ENCODE measurements at regions of chr3 and their contacts with region 1.

Region 1: GRCh38 chr3:12135029-12135657 is 23.6 kb downstream of the TIMP4 start:
- DNase-seq: peak; percentile 75 to 89 (median 89)
- ATAC-seq: peak; percentile 84 to 90
- H3K4me3 ChIP-seq: no peak overlapping the region
- H3K27ac ChIP-seq: no peak overlapping the region
- H3K4me1 ChIP-seq: peaks cover 5% of the 10 kb centered on the region
- H3K27me3 ChIP-seq: no peaks in the 10 kb centered on the region

Region 2: DNA sequence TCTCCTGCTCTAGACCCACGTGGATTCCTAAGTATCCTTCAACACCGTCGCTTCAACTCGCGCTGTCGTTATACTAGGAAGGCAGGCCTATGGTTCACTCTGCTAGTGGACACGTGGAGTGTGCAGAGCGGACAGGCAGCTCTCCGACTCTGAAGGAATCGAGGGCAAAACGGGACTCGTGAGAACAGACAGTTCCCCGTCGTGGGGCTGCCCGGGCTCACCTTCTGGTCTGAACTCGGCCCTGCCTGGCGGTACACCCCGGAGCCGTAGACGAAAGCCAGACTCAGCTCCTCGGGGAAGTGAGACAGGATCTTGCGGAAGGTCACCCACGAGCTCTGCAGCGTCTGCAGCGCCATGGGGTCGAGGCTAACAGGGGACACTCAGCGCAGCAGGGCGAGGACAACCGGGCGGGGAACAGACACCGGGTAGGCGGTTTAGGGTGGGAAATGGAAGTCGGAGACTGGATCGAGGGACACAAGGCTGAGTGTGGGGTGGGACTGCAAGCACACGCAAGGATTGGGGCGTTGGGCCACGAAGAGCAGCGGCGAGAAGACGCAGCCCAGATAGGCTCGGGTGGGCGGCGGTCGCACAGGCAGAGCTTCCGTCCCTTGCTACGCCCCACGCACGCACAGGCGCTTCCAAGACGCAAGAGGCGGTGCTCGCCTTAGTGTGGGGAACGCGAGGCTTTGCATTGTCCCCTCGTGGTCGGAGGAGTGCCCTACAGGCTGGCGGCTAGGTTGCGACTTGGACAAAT is 288.7 kb before region 1 on chr3 and contains the start of gene TAMM41:
- intact Hi-C with region 1: no loop called
- DNase-seq: peak; percentile 95 to 97 (median 97)
- ATAC-seq: peak; percentile 100
- H3K4me3 ChIP-seq: peak within 1 kb of the TSS; percentile 73
- H3K27ac ChIP-seq: peak within 1 kb of the TSS; percentile 78
- H3K4me1 ChIP-seq: peaks cover 5% of the 10 kb centered on the region
- H3K27me3 ChIP-seq: no peaks in the 10 kb centered on the region
- total RNA-seq, gene TAMM41: 9.8 to 11.1 (median 10.8) TPM

Region 3: DNA sequence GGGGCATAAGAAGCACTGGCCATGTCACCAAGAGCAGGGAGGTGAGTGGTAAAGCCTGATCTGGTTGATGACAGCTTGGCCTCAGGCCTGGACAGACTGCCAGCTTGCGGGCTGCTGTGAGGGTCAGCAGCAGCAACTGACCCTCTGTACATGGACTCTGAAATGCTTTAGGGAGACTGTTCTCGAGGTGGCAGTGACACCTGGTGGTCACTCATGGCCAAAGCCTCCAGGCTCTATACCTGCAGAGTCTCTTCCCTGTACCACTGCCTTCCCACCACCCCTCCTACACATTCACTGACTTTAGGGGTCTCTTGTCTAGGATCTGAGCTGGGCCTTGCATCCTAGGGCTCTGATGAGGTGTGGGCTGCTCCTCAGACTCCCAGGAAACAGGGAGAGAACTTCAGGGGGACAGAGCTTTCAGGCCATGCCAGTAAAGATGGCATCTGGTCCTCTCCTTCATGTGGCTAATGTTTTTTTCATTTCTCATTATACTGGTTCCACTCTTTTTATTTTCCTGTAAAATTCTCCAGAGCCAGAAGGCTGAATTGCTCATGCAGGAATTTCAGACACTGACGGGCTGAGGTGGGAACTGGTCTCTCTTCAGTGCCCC is 40.8 kb after region 1 on chr3:
- intact Hi-C with region 1: loop called (anchors 2 to 5 kb)
- DNase-seq: peak; percentile 68 to 89 (median 82)
- ATAC-seq: peak; percentile 84 to 85
- H3K4me3 ChIP-seq: no peak overlapping the region
- H3K27ac ChIP-seq: no peak overlapping the region
- H3K4me1 ChIP-seq: peaks cover 16% of the 10 kb centered on the region
- H3K27me3 ChIP-seq: no peaks in the 10 kb centered on the region

Region 4: DNA sequence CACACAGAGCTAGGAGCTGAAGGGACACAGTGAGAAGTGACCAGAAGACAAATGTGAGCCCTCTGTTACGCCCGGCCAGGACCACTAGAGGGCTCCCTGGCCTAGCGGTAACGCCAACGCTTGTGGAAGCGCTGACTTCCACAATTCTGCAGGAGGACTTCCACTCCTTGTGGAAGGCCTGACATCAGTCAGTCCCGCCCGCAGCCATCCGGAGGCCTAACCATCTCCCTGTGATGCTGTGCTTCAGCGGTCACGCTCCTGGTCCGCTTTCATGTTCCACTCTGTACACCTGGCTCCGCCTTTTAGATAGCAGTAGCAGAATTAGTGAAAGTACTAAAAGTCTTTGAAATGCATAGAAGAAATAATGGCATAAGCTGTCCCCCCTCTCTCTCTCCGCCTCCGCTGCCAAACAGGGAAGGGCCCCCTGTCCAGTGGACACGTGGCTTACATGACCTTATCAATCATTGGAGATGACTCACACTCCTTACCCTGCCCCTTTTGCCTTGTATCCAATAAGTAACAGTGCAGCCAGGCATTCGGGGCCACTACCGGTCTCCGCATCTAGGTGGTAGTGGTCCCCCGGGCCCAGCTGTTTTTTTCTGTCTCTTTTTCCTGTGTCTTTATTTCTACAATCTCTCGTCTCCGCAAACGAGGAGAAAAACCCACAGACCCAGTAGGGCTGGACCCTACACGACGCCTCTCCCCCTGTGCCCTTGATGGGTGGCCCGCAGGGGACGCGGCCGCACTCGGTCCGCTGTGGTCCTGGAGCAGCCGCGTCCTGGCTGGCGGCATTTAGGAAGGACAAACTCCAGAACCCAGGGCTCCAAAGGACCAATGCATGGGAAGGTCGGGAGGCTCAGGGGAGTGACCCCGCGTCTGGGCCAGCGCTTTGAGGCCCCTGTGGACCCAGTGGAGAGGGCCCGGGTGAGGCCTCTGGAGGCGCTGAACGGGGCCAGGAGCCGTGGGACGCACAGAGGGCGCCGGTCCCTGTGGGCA is 733.2 kb after region 1 on chr3:
- intact Hi-C with region 1: loop called in 1 of 4 experiments (anchors 10 kb)
- DNase-seq: peak; percentile 87 to 94 (median 92)
- ATAC-seq: peak; percentile 91 to 92
- H3K4me3 ChIP-seq: peak overlapping the region; percentile 21
- H3K27ac ChIP-seq: no peak overlapping the region
- H3K4me1 ChIP-seq: no peaks in the 10 kb centered on the region
- H3K27me3 ChIP-seq: no peaks in the 10 kb centered on the region